Motor neuron (in vitro differentiated cells): ENCODE measurements at regions of chr9 and their contacts with region 1.

Region 1: DNA sequence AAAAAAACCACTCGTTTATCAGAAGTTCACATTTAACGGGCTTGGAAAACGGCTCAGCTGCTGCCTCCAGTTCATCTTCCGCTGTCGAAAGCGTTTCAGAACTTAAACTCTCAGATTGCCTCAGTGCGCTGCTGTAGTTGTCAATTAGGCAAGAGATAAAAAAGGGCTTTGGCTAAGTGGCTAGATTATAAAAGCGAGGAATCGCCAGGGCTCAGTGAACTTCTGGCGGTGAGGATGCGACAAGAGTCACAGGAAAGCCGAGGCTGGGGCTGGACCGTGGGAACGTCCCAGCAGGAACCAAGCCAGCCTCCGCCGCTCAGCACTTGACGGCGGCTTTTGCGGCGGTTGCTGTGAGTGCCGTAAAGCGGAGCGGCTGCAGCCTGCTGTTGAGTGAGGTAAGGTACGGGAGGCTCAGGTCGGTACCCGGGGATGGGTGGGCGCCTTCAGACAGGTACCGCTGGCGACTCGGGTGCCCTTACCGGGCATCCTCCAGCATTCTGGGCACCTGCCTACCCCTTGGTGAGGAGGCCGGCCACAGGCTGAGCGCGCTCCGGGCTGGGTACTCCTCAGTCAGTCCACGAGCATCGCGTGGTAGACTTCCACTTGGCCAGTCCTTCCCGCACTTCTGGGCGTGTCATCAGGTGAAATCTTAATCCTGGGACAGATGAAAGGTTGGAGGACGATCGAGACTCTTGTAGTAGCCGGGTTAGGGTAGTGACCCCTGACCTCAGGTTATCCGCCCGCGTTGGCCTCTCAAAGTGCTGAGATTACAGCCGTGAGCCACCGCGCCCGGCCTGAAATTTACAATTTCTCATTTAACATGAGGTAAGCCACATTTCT is at the start of gene FKTN:
- ATAC-seq: peak; percentile 96 to 99 (median 98)
- H3K4me3 ChIP-seq: peak within 1 kb of the TSS; percentile 56 to 99 (median 83)
- H3K27ac ChIP-seq: peak within 1 kb of the TSS in 1 of 2 donors; percentile 50
- H3K4me1 ChIP-seq: peaks cover 6% of the 10 kb centered on the region in 2 donors
- total RNA-seq, gene FKTN: 15.7 to 32.8 (median 18.8) TPM

Region 2: GRCh38 chr9:105405514-105406131 is 152.4 kb before region 1 on chr9:
- in situ Hi-C with region 1: no loop called
- ATAC-seq: no peak
- H3K4me3 ChIP-seq: no peak overlapping the region
- H3K27ac ChIP-seq: no peak overlapping the region
- H3K4me1 ChIP-seq: peaks cover 0 to 9% of the 10 kb centered on the region in 2 donors

Region 3: DNA sequence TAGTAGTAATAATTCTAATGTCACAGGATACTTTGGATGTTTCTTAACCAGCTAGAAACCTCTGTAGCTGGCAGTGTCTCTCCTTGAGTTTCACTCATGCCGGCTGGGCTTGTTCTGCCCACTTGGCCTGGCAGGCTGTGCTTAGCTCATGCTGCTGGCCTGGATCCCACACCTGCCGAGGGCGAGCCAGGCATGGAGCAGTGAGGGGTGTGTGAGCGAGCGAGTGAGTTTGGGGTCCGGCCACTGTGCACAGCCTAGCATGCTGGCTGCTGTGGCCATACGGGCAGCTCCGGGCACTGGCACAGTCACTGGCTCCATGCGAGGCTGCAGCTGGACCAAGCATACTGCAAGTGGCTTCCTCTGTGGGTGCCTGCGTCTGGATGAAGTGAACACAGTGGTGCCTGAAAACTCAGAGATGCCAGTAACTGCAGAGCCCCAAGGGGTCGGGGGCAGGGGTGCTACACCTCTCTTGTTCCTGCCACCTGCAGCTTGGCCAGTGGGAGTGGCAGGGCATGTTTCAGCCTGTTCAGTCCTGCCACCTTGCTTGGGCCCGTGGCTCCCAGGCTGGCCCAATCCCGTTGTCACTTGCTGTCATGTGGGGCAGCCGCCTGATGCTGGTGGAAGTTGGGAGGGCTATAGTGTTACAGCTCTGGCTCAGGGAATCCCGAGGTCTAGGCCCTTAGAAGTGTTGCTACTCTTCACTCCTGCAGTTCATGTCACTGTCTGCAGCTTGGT is 100.3 kb before region 1 on chr9:
- in situ Hi-C with region 1: loop called in 1 of 9 experiments (anchors 25 kb)
- ATAC-seq: no peak
- H3K4me3 ChIP-seq: no peak overlapping the region
- H3K27ac ChIP-seq: no peak overlapping the region
- H3K4me1 ChIP-seq: peaks cover 0 to 2% of the 10 kb centered on the region in 2 donors